GM18951 (cell line): ENCODE measurements at regions of chr2 and their contacts with region 1.

Region 1: GRCh38 chr2:170815746-170816503 is 762 bp upstream of the GAD1 start:
- POLR2A ChIP-seq: no peak

Region 2: GRCh38 chr2:170177950-170178781 is 637.8 kb before region 1 on chr2 and contains the start of gene MYO3B:
- in situ Hi-C with region 1: no loop called
- POLR2A ChIP-seq: no peak

Region 3: DNA sequence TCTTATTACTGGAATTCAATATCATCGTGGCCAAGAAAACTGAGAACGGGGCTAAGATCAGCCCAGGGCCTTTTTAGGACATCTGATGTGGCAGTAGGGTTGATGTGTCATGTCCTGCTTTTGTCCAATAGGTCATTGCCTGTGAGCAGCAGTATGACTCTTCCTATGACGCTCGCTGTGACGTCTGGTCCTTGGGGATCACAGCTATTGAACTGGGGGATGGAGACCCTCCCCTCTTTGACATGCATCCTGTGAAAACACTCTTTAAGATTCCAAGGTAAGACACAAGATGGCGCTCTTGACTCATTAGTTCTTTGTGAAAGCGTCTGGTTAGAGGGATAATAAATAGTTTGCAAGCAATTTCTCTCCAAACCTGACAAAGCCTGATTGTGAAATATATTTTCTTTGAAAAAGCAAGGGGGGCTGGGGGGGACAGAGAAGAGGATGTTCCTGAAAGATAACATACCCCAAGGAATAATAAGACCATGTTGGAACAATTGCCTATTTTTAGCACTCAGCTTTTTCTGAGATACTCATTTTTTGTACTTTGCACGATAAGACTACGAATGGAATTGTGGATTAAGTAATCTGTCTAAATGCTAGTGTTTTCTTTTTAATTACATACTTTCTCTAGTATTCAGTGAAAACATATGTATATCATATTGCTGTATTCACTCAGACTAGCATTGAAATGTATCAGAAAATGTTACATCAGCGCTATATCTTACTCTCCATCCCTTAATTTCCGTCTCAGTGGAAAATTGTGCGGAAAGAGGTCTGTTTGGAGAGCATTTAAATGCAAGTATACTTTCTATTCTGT is 579.9 kb before region 1 on chr2:
- in situ Hi-C with region 1: loop called (anchors 10 kb)
- POLR2A ChIP-seq: no peak

Region 4: DNA sequence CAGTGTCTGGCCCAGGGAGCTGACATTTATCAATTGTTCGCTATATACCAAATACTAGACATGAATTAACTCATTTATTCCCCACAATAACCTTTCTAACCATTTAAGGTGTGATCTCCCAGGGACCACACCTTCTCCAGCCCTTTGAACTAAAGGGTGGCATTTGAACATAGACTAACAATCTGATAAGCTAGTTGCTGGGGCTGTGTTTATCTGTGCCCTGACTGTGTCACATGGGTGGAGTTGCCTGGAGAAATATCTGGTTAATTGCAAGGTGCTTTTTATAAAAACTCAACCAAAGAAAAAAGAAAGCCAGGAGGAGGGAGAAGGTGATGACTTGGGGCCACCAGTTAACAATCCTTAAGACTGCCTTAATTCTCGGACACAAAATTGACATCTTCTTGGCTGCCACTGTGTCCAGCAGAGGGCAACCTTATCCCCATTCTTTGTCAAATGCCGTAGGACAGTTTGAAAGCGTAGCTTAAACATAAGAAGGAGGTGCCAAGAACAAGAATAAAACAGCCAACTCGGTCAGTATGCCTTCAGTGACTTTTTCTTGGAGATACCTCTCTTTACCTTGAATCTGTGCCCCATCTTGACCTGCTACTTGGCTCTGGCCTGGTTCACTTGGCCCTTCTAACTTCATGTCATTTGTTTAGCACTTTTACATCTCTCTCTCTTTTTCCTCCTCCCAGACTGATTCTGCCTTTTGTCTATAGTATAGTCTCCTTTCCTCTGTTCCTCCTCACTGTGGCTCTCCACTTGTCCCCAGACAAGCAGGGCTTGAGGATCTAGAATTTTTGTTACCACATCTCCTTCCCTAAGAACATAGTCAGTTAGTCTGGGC is 454.6 kb before region 1 on chr2:
- in situ Hi-C with region 1: loop called (anchors 10 kb)
- POLR2A ChIP-seq: no peak

Region 5: DNA sequence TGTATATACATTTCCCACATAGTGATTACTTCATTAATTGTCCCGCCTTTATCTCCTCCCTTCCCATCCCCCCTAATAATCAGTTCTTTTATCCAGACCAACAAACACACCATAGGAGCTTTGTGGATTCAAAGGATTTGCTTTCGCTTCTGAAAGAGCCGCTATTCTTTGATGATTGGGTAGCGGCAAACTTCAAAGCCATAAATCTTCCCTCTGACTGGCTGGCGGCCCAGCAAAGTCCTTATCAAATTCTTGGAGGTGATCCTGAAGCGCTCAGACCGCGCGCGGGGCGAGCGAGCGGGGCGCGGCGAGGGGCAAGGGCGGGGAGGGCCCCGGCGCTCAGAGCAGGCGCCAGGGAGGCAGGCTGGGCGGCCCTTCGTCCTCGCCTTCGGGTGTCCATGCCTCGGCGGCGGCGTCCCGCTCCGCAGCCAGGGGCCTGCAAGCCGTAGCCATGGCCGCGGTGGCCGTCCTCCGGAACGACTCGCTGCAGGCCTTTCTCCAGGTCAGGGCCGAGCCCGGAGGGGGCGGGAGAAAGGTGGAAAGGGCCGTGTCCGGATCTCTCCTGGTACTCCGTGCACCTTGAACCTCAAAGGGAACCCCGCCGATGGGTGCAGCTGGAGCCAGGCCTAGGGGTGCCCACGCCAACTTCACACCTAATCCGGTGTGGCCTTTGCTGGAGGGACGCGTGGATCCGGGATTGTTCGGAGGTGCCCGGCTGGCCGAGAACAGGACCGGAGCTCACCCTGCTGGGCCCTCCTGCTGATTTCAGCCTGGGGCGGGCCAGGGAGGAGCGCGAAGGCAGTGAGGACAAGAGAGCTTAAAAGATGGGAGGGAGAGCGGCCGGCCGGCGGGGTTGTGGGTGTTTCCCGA is 100.6 kb before region 1 on chr2 and contains the start of gene SP5:
- in situ Hi-C with region 1: loop called (anchors 10 kb)
- POLR2A ChIP-seq: no peak

Region 6: GRCh38 chr2:171095014-171095582 is 279.2 kb after region 1 on chr2:
- in situ Hi-C with region 1: no loop called
- POLR2A ChIP-seq: no peak

Region 7: GRCh38 chr2:171235247-171235881 is 419.4 kb after region 1 on chr2:
- in situ Hi-C with region 1: no loop called
- POLR2A ChIP-seq: no peak

Region 8: GRCh38 chr2:171383141-171383540 is 567.2 kb after region 1 on chr2:
- in situ Hi-C with region 1: no loop called
- POLR2A ChIP-seq: no peak